Ascending aorta (tissue), 2 donors: ENCODE measurements at regions of chr16 and their contacts with region 1.

Region 1: DNA sequence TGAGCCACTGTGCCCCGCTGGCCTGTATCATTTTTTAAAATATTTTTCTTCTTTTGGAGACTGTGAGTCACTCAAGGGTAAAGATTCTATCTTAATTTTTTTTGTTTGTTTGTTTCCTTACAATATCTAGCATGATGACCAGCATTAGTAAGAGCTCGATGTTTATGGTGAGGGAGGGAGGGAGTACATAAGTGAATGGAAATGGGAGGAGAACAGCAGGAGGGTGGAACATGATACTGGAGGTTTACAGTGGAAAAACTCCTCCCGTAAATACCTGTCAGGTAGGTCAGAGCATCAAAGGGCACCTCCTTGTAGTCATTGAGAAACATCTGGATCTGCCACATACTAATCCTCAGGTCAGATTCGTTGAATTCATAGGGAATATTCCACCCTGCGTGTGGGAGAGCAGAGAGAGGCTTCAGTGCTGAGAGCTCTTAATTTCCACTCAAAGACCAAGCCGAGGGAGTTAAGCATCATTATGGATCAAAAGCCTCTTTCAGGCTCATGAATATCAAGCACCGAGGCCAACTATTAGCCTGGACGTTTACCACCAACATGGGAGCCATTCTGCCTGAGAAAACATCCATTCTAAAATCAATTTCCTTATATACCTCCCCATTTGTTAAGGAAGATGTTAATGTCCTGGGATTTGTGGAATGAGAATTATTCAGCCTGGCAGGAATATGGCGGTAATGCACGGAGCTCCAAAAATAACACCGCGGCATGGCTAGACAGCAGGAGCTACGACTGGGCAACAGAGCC is 51.8 kb downstream of the LYRM1 start:
- DNase-seq: no peak
- H3K4me3 ChIP-seq: peak overlapping the region in 1 of 2 donors; percentile 36
- H3K27ac ChIP-seq: peak overlapping the region; percentile 46 to 51
- H3K4me1 ChIP-seq: no peaks in the 10 kb centered on the region
- H3K27me3 ChIP-seq: no peaks in the 10 kb centered on the region
- CTCF ChIP-seq: no peak

Region 2: GRCh38 chr16:20866145-20866772 is 86.1 kb before region 1 on chr16:
- intact Hi-C with region 1: loop called (anchors 5 kb)
- DNase-seq: peak; percentile 17 to 86
- H3K4me3 ChIP-seq: peak overlapping the region in 1 of 2 donors; percentile 44
- H3K27ac ChIP-seq: peak overlapping the region; percentile 81 to 82
- H3K4me1 ChIP-seq: peaks cover 38 to 71% of the 10 kb centered on the region in 2 donors
- H3K27me3 ChIP-seq: no peaks in the 10 kb centered on the region
- CTCF ChIP-seq: no peak

Region 3: DNA sequence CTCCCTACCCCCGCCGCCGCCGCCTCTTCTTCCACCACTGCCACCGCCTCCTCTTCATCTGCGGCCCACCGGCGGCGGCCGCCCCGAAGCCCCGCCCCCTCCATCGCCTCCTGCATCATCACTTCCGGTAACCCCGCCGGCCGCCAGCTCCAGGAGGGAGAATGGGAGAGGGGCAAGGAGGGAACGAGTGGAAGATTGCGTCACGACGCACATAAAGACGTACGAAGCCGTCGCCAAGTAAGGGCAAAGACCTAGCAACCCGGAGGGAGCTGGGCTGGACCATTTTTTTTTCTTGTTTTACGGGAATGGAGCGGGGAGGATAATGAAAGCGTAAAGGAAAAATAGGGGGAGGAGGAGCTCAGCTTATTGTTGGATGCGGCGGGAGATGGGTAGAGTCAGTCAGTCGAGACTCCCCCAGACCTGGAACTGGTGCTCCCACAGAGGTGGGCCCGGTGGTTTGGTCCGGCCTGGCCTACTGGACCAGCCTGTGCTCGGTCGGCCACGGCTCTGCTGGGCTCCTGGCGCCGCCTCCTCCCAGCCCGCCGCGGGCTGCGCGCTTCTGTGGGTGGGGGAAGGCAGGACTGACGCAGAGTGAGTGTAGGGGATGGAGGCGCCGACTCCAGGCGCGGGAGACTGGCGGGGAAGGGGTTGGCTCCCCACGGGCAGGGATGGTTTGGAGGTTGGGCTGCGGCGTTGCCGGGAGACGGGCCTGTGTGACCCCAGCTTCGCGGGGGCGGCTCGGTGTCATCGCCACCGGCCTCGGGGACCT is 51.9 kb before region 1 on chr16 and contains the starts of genes DCUN1D3 and LYRM1:
- intact Hi-C with region 1: no loop called
- DNase-seq: peak; percentile 92 to 99
- H3K4me3 ChIP-seq: peak within 1 kb of the TSS; percentile 80 to 93
- H3K27ac ChIP-seq: peak within 1 kb of the TSS; percentile 96 to 100
- H3K4me1 ChIP-seq: peaks cover 12 to 56% of the 10 kb centered on the region in 2 donors
- H3K27me3 ChIP-seq: no peaks in the 10 kb centered on the region
- CTCF ChIP-seq: no peak
- total RNA-seq, gene DCUN1D3: 9.8 TPM
- total RNA-seq, gene LYRM1: 3.9 TPM

Region 4: DNA sequence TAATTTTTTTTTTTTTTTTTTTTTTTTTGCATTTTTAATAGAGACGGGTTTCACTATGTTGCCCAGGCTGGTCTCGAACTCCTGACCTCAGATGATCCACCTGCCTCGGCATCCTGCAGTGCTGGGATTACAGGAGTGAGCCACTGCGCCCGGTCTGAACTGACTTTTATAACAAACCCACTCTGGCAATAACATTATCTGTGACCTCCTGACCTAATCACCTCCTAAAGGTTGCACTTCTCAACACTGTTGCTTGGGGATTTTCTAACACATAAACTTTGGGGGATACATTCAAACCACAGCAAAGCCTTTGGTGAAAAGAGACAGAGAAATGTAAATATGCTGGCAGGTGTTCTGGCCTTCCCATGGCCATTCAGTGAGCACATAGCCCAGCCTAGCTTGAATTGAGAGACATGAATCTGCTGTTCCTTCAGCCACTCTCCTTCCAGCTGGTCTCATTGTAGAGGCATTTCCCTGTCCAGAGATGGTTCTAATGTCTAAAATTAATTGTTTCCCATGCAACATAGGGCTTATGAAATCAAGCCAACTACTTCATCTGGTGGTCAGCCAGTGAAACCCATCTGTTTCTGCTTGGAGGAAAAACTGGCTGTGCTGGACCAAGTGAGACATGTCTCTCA is 23.4 kb before region 1 on chr16:
- intact Hi-C with region 1: no loop called
- DNase-seq: no peak
- H3K4me3 ChIP-seq: no peak overlapping the region
- H3K27ac ChIP-seq: no peak overlapping the region
- H3K4me1 ChIP-seq: peaks cover 6 to 14% of the 10 kb centered on the region in 2 donors
- H3K27me3 ChIP-seq: no peaks in the 10 kb centered on the region
- CTCF ChIP-seq: no peak